CD8-positive, alpha-beta T cell (primary cell): ENCODE measurements at regions of chr11 and their contacts with region 1.

Region 1: DNA sequence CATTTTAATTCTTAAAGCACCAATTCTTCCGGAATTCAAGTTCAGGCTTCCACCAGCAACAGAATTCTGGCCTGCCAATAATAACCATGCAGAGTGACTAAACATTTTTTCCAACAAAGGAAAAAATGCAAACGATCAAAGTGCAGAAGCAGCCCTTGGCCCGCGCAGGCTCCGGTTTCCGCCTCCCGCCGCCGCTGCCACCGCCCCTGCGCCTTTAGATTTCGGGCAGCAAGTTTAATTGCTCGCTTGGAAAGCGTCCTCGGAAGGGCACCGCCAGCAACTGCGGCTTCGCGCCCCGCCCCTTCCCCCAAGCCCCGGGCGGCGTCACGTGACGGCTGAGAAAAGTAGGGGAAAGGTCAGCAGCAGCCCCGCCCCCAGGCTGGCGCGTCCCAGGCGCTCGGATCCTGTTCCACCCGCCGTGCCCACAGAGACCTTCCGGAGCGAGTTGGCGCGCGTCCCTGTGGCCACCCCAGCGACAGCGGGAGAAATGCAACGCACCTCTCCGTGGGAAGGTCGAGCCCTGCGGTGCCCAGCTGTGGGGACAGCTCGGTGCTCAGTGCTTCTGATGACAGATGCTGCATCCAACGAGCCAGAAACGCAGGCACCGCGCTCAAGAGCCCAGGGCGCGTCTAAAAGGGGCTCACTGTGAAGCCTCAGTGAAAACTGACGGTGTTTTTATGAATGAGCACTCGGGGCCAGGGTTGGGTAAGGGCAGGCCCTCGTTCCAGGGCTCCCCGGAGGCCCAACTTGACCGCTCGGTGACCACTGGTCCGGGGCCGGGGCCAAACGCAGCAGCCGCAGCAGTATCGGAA is 2.5 kb downstream of the CPT1A start:
- DNase-seq: peak; percentile 87 to 98 (median 95)
- ATAC-seq: peak; percentile 64
- H3K4me3 ChIP-seq: peak overlapping the region; percentile 63 to 70
- H3K4me3 Mint-ChIP-seq: peak overlapping the region; percentile 85
- H3K27ac ChIP-seq: peak overlapping the region; percentile 60 to 92
- H3K27ac Mint-ChIP-seq: peak overlapping the region; percentile 93
- H3K4me1 ChIP-seq: peaks cover 59% of the 10 kb centered on the region
- H3K4me1 Mint-ChIP-seq: peaks cover 66% of the 10 kb centered on the region
- H3K27me3 ChIP-seq: no peaks in the 10 kb centered on the region
- H3K27me3 Mint-ChIP-seq: no peaks in the 10 kb centered on the region
- CTCF ChIP-seq: no peak

Region 2: DNA sequence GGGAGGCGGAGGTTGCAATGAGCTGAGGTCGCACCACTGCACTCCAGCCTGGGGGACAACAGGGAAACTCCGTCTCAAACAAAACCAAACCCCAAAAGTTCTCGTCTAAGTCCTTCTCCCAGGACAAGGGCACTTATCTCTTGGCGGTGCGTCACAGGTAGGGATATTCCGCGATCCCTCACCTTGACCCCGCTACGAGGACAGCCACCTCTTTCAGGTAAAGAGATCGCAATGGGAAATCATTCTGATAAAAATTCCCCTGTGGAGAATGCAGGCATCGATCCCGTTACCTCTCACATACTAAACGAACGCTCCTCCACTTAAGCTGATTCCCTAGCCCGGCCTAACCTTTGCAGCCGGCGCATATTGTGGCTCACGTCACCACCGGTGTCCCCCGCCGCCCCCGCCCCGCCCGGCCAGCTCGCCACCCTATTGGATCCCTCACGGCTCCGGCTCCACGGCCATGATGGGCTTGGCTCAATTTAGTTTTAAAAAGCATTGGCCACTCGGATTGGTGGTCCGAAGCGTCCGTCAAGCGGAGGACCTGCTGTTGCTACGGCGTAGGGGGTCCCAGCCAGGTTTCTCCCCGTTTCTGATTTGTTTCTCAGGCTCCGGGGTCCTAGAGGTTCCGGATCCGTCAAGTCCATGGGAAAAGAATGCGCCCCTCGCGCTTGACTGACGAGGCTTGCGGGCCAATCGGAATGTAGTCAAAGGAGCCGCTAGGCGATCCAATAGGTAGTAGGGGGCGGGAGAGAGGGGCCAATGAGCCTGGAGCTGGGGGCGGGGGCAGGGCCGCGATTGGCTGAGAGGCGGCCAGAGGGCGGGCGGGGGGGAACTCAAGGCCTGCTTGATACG is 379.1 kb before region 1 on chr11:
- CTCF ChIA-PET with region 1: no interaction called
- POLR2A ChIA-PET with region 1: no interaction called
- intact Hi-C with region 1: loop called in 1 of 2 experiments (anchors 5 kb)
- DNase-seq: peak; percentile 90 to 98 (median 94)
- ATAC-seq: peak; percentile 91
- H3K4me3 ChIP-seq: peak overlapping the region; percentile 92 to 95
- H3K4me3 Mint-ChIP-seq: peak overlapping the region; percentile 97
- H3K27ac ChIP-seq: peak overlapping the region; percentile 95 to 98
- H3K27ac Mint-ChIP-seq: peak overlapping the region; percentile 98
- H3K4me1 ChIP-seq: peaks cover 35% of the 10 kb centered on the region
- H3K4me1 Mint-ChIP-seq: peaks cover 38% of the 10 kb centered on the region
- H3K27me3 ChIP-seq: no peaks in the 10 kb centered on the region
- H3K27me3 Mint-ChIP-seq: no peaks in the 10 kb centered on the region
- CTCF ChIP-seq: no peak

Region 3: DNA sequence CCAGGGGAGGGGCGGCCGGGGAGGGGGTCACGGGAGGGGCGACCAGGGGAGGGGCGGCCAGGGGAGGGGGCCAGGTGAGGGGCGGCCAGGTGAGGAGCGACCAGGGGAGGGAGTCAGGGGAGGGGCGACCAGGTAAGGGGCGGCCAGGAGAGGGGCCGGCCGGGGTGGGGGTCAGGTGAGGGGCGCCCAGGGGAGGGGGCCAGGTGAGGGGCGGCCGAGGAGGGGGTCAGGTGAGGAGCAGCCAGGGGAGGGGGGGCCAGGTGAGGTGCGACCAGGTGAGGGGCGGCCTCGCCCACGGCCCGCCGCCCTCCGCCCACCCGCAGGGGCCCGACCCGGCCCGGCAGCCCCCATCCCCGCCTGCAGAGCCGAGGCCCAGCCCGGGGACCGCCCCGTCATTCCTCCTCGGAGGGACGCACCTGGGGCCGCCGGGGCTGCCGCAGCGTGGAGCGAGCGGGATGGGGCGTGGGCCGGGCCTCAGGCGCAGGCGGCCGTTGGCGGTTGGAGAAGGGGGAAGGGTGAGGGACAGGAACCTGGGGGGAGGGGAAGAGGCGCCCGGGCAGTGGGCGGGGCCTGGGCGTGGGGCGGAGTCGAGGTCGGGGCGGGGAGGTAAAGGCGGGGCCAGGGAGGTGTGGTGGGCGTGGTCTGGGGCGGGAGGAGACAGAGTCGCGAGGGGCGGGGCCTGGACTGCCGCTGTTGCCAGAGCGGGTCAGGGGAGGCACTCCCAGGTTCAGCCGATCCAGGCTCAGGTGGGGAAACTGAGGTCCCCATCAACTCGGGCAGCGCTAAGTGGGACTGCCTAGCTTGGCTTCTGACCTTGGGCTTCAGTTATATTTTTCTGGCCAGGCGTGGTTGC is 88.0 kb before region 1 on chr11 and contains the start of gene TESMIN:
- CTCF ChIA-PET with region 1: no interaction called
- POLR2A ChIA-PET with region 1: no interaction called
- intact Hi-C with region 1: loop called (anchors 1 to 2 kb)
- DNase-seq: peak; percentile 83 to 95 (median 91)
- ATAC-seq: peak; percentile 99
- H3K4me3 ChIP-seq: peak within 1 kb of the TSS; percentile 30 to 50
- H3K4me3 Mint-ChIP-seq: peak within 1 kb of the TSS; percentile 72
- H3K27ac ChIP-seq: no peak within 1 kb of the TSS
- H3K27ac Mint-ChIP-seq: no peak within 1 kb of the TSS
- H3K4me1 ChIP-seq: peaks cover 7% of the 10 kb centered on the region
- H3K4me1 Mint-ChIP-seq: peaks cover 13% of the 10 kb centered on the region
- H3K27me3 ChIP-seq: no peaks in the 10 kb centered on the region
- H3K27me3 Mint-ChIP-seq: no peaks in the 10 kb centered on the region
- CTCF ChIP-seq: no peak
- total RNA-seq, gene TESMIN: 1.8 to 2.5 TPM

Region 4: GRCh38 chr11:68816917-68817419 is 22.3 kb before region 1 on chr11:
- CTCF ChIA-PET with region 1: interaction called, 11 read pairs
- POLR2A ChIA-PET with region 1: interaction called, 3 read pairs
- intact Hi-C with region 1: no loop called
- DNase-seq: peak in 3 of 9 experiments; percentile 15 to 49 (median 30)
- ATAC-seq: no peak
- H3K4me3 ChIP-seq: no peak overlapping the region
- H3K4me3 Mint-ChIP-seq: peak overlapping the region; percentile 13
- H3K27ac ChIP-seq: peak overlapping the region in 1 of 2 experiments; percentile 44
- H3K27ac Mint-ChIP-seq: peak overlapping the region; percentile 73
- H3K4me1 ChIP-seq: peaks cover 21% of the 10 kb centered on the region
- H3K4me1 Mint-ChIP-seq: peaks cover 32% of the 10 kb centered on the region
- H3K27me3 ChIP-seq: no peaks in the 10 kb centered on the region
- H3K27me3 Mint-ChIP-seq: no peaks in the 10 kb centered on the region
- CTCF ChIP-seq: no peak

Region 5: DNA sequence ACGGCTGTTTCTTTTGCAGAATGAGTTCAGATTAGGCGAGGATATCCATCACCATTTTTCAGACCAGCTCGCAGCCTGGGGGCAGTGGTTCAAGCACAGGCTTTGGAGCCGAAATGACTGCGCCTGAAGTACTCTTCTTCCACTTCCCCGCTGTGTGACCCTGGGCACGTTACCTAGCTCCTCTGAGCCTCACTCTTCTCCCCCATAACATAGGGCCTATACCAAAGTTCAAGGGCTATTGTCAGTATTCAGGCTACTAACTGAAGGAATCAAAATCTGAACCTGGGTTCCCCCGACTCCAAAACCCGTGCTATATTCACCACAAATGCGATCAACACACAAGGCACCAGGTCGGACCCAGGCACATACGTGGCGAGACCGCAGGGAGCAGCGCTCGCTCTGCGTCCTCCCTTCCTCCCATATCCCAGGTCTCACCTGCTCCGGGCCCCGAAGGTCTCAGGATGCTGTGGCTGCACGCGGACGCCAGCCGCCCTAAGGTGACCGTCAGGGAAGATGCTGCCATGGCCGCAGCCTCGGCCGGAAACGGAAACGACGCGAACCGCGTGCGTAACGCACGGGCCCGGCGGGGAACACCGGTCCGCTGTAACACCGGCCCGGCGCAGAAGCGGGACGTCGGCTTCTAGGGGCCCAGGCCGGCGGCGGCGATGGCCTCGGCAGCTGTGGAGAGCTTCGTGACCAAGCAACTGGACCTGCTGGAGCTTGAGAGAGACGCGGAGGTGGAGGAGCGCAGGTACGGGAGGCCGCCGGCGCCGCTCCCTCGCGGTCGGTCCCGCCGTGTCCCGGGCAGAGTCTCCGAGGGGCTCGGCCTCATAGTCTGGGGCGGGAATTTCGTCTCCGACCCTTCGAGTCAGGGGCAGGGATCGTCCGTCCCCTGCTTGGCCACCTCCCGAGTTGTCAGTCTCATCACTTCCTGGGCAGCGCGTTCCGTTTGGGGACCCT is 64.3 kb after region 1 on chr11 and contains the starts of genes IGHMBP2 and MRPL21:
- CTCF ChIA-PET with region 1: no interaction called
- POLR2A ChIA-PET with region 1: no interaction called
- intact Hi-C with region 1: loop called (anchors 1 to 5 kb)
- DNase-seq: peak; percentile 76 to 93 (median 86)
- ATAC-seq: peak; percentile 90
- H3K4me3 ChIP-seq: peak within 1 kb of the TSS; percentile 55 to 82
- H3K4me3 Mint-ChIP-seq: peak within 1 kb of the TSS; percentile 98
- H3K27ac ChIP-seq: peak within 1 kb of the TSS; percentile 64 to 87
- H3K27ac Mint-ChIP-seq: peak within 1 kb of the TSS; percentile 97
- H3K4me1 ChIP-seq: peaks cover 19% of the 10 kb centered on the region
- H3K4me1 Mint-ChIP-seq: peaks cover 46% of the 10 kb centered on the region
- H3K27me3 ChIP-seq: no peaks in the 10 kb centered on the region
- H3K27me3 Mint-ChIP-seq: no peaks in the 10 kb centered on the region
- CTCF ChIP-seq: no peak
- total RNA-seq, gene IGHMBP2: 25.5 to 27.3 TPM
- total RNA-seq, gene MRPL21: 48.4 to 53.6 TPM

Region 6: DNA sequence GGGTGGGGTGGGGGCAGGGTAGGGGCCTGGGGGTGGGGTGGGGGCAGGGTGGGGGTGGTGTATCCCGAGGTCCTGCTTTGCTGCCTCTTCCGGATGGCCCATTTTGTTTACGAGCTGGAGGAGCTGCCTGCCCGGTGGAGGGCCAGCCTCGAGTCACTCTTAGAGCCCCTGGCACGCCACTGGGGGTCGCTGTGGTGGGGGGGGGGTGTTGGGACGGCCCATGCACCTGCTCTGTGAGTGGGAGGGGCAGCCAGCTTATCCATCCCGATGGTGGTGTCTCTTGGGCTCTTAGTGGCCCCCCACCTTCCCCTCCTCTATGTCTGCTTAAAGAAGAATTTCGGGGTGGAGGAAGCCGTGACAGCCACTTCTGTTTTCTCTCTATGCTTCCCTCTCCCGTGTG is 116.9 kb after region 1 on chr11:
- CTCF ChIA-PET with region 1: no interaction called
- POLR2A ChIA-PET with region 1: no interaction called
- intact Hi-C with region 1: no loop called
- DNase-seq: peak in 5 of 9 experiments; percentile 9 to 51 (median 41)
- ATAC-seq: peak; percentile 44
- H3K4me3 ChIP-seq: no peak overlapping the region
- H3K4me3 Mint-ChIP-seq: no peak overlapping the region
- H3K27ac ChIP-seq: no peak overlapping the region
- H3K27ac Mint-ChIP-seq: no peak overlapping the region
- H3K4me1 ChIP-seq: no peaks in the 10 kb centered on the region
- H3K4me1 Mint-ChIP-seq: peaks cover 3% of the 10 kb centered on the region
- H3K27me3 ChIP-seq: no peaks in the 10 kb centered on the region
- H3K27me3 Mint-ChIP-seq: peaks cover 4% of the 10 kb centered on the region
- CTCF ChIP-seq: no peak

Region 7: DNA sequence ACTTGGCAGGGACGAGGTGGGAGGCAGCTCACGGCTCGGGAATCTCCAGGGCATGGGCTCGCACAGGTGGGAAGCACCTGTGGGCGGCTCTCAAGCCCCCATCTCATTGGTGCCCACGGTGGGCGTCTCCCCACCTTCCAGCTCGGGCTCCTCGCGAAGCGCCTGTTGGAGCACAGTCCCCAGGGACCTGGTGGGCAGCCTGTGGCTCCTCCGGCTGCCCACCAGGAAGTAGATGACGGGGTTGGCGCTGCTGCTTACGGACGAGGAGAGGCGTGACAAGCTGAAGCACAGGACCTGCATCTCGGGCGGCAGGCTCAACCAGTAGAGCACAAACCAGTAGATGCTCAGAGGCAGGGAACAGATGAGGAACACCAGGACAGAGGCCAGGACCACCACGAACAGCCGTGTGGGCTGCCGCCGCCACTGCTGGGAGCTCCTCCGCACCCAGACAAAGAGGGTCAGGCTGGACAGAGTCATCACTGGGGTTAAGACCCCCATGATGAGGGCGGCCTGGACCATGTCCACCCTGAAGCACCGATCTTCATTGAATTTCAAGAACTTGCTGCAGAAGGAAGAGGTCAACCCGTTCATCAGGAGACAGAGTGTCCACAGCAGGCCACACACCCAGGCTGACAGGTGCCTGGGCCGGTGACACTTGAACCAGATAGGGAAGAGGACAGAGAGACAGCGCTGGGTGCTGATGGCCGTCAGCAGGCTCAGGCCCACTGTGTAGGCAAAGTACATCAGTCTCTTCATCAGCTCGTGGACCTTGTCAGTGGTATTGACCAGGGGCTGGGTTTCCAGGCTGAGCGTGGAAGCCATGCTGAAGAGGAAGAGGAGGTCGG is 140.9 kb after region 1 on chr11:
- CTCF ChIA-PET with region 1: no interaction called
- POLR2A ChIA-PET with region 1: no interaction called
- intact Hi-C with region 1: no loop called
- DNase-seq: no peak
- ATAC-seq: no peak
- H3K4me3 ChIP-seq: no peak overlapping the region
- H3K4me3 Mint-ChIP-seq: no peak overlapping the region
- H3K27ac ChIP-seq: no peak overlapping the region
- H3K27ac Mint-ChIP-seq: no peak overlapping the region
- H3K4me1 ChIP-seq: no peaks in the 10 kb centered on the region
- H3K4me1 Mint-ChIP-seq: no peaks in the 10 kb centered on the region
- H3K27me3 ChIP-seq: no peaks in the 10 kb centered on the region
- H3K27me3 Mint-ChIP-seq: peaks cover 5% of the 10 kb centered on the region
- CTCF ChIP-seq: no peak

Region 8: GRCh38 chr11:69642913-69643632 is 803.8 kb after region 1 on chr11:
- CTCF ChIA-PET with region 1: no interaction called
- POLR2A ChIA-PET with region 1: no interaction called
- intact Hi-C with region 1: loop called in 1 of 2 experiments (anchors 5 kb)
- DNase-seq: peak; percentile 56 to 87 (median 73)
- ATAC-seq: peak; percentile 75
- H3K4me3 ChIP-seq: peak overlapping the region; percentile 61 to 65
- H3K4me3 Mint-ChIP-seq: peak overlapping the region; percentile 78
- H3K27ac ChIP-seq: no peak overlapping the region
- H3K27ac Mint-ChIP-seq: no peak overlapping the region
- H3K4me1 ChIP-seq: peaks cover 30% of the 10 kb centered on the region
- H3K4me1 Mint-ChIP-seq: peaks cover 23% of the 10 kb centered on the region
- H3K27me3 ChIP-seq: peaks cover 5 to 28% of the 10 kb centered on the region in 2 experiments
- H3K27me3 Mint-ChIP-seq: peaks cover 21% of the 10 kb centered on the region
- CTCF ChIP-seq: peak; percentile 97